ENCODE measurements at regions of chr15 and their contacts with region 1.

Region 1: GRCh38 chr15:62075595-62076282 is 9.0 kb downstream of the C2CD4A start:
- DNase-seq: no peak
- H3K4me3 Mint-ChIP-seq: no peak overlapping the region
- H3K27ac Mint-ChIP-seq: no peak overlapping the region
- H3K4me1 Mint-ChIP-seq: no peaks in the 10 kb centered on the region
- H3K27me3 Mint-ChIP-seq: peaks cover 21% of the 10 kb centered on the region

Region 2: GRCh38 chr15:62046078-62046743 is 29.5 kb before region 1 on chr15:
- CTCF ChIA-PET with region 1: no interaction called
- POLR2A ChIA-PET with region 1: no interaction called
- DNase-seq: no peak
- H3K4me3 Mint-ChIP-seq: peak overlapping the region; percentile 18
- H3K27ac Mint-ChIP-seq: peak overlapping the region; percentile 2
- H3K4me1 Mint-ChIP-seq: peaks cover 23% of the 10 kb centered on the region
- H3K27me3 Mint-ChIP-seq: no peaks in the 10 kb centered on the region

Region 3: DNA sequence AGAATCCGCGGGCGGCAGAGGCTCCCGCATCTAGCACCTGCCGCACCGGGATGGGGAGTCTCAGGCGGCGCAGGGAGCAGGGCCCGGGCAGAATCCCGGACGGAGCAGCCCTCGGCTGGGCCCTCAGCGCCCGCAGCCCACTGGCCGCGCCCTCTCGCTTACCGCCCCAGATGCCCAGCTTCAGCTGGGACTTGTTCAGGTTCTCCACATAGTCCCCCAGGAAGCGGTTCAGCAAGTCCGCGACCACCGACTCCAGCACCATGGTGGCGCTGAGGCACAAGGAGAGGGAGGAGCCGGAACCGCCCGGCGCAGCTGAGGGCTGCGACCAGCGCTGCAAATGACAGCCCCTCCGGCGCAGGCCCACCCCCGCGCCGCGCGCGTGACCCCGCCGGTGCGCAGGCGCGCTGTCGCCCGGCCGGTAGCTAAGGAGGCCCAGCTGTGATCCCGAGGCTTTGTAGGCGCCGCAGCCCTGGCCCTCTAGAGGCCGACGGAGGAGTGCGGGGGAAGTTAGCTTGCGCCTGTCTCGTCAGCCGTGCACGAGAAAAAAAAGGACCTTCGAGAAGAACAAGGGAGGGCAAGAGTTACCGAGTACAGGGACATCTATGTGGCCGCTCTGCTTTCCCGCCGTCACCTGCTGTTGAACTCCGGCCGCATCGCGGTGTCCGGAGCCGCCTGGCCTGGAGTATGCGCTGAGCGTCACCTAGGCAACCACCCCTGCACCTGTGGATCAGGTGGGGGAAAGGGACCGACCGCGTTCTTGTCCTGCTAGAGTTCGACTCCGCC is 15.4 kb before region 1 on chr15 and contains the start of gene VPS13C:
- CTCF ChIA-PET with region 1: interaction called, 19 read pairs
- POLR2A ChIA-PET with region 1: interaction called, 3 read pairs
- DNase-seq: peak; percentile 91
- H3K4me3 Mint-ChIP-seq: peak within 1 kb of the TSS; percentile 87
- H3K27ac Mint-ChIP-seq: peak within 1 kb of the TSS; percentile 97
- H3K4me1 Mint-ChIP-seq: peaks cover 38% of the 10 kb centered on the region
- H3K27me3 Mint-ChIP-seq: peaks cover 22% of the 10 kb centered on the region
- total RNA-seq, gene VPS13C: 80.4 to 88.0 TPM

Measured in activated CD4-positive, alpha-beta T cell treated with anti-CD3 and anti-CD28 coated beads, Interleukin-2, amount 10 ng/mL, durations not matched to agents 7 days and 5 days (primary cell).